GM10248 (cell line): ENCODE measurements at regions of chr22 and their contacts with region 1.

Region 1: GRCh38 chr22:30005213-30005857 is 74.9 kb upstream of the HORMAD2 start:
- DNase-seq: peak; percentile 57
- CTCF ChIP-seq: peak; percentile 97

Region 2: GRCh38 chr22:29625090-29625825 is 380.1 kb before region 1 on chr22:
- CTCF ChIA-PET with region 1: interaction called, 28 read pairs
- POLR2A ChIA-PET with region 1: no interaction called
- DNase-seq: peak; percentile 40
- CTCF ChIP-seq: peak; percentile 81

Region 3: GRCh38 chr22:29689880-29690213 is 315.5 kb before region 1 on chr22:
- CTCF ChIA-PET with region 1: interaction called, 21 read pairs
- POLR2A ChIA-PET with region 1: no interaction called
- DNase-seq: no peak
- CTCF ChIP-seq: peak; percentile 43

Region 4: DNA sequence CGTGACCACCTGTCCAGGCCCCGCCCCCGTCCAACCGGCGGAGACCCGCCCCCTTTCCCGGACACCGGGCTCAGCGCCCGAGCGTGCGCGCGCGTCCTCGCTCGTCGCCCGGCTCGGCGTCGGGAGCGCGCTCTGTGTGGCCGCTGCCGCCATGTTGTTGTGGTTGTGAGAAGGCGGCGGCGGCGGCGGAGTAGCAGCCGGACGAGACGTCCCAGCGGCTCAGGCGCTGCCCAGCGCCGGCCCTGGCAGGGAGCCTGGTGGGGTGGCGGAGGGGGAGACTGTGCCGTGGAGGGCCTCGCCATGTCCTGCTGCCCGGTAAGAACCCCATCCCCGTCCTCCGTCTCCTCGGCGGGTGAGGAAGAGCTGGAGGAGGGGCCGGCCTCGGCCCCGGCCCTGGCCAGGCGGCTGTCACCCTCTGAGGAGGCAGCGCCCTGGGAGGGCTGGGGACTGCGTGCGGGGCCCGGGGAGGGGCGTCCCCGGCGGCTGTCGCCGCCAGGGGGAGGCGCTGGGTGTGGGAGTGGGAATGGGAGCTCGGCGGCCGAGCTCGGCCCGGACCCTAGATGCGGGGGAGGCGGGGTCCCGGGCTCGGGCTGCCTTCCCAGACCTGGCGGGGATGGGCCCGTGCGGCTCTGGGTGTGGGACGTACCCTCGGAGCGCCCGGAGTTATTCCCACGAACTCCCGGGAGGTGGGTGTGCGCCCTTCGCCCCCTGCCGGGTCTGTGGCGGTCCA is 122.1 kb before region 1 on chr22 and contains the start of gene MTMR3:
- CTCF ChIA-PET with region 1: interaction called, 10 read pairs
- POLR2A ChIA-PET with region 1: no interaction called
- DNase-seq: peak; percentile 83
- CTCF ChIP-seq: peak; percentile 4

Region 5: GRCh38 chr22:29994027-29994715 is 11.2 kb before region 1 on chr22:
- CTCF ChIA-PET with region 1: interaction called, 39 read pairs
- POLR2A ChIA-PET with region 1: no interaction called
- DNase-seq: no peak
- CTCF ChIP-seq: no peak

Region 6: DNA sequence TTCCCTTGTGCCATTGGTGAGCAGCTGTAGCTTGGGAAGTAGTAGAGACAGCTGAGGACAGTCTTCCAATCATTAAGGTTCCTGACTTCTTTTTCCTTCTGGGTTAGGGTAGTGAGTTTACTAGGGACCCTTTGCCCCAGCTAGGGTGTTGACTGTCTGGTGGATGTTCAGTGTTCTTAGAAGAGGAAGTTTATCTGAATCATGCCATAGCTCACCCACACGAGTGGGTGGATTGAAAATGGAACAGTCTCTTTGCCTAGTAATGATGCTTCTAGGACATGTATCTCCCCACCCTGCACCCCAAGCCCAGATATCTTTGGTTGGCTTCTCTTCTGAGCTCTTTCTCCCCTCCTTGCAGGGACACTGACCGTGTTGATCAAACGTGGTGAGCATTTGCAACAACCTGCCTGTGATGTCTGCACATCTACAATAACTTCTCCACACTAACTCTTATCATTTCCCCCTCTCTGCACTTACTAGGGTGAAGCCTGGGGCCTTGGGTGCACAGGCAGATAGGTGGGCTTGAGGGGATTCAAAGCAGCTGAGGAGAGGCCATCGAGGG is 17.8 kb after region 1 on chr22:
- CTCF ChIA-PET with region 1: interaction called, 86 read pairs
- POLR2A ChIA-PET with region 1: no interaction called
- DNase-seq: no peak
- CTCF ChIP-seq: no peak